Motor neuron (in vitro differentiated cells): ENCODE measurements at regions of chr5 and their contacts with region 1.

Region 1: GRCh38 chr5:88660947-88661805 is 221.8 kb downstream of the MEF2C start:
- ATAC-seq: peak; percentile 89 to 97 (median 91)
- H3K4me3 ChIP-seq: peak overlapping the region; percentile 37 to 48 (median 38)
- H3K27ac ChIP-seq: peak overlapping the region; percentile 50 to 89
- H3K4me1 ChIP-seq: peaks cover 11 to 21% of the 10 kb centered on the region in 2 donors

Region 2: DNA sequence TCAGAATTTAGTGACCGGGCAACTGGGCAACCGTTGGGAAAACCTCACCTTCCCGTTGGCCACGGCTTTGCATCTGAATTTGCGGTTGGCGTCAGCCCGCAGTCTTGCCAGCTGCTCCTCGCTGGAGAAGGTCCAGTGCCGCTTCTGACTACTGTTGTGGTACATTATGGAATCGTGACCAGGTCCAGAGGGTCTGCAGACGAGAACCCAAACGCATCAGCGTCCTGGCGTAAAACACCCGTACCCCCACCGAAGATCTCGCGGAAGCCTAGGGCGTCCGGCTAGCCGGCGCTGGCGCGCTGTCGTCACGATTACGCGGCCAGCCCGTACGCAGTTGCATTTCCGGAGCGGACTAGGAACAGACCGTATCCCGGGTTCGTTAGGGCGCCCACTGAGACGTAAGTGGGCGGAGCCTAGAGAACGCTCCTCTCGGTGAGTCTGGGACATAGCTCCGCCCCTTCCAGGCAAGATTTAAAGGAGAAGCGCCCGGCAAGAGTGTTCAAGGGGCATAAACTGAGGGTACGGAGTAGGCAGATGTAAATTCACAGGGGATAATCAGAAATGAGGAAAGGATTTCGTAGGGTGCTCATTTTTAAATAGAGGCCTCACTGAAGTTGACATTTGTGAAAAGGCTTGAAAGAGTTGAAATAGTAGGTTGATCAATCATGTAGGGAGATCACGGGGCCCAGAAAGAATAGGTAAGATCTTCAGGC is 1248.4 kb before region 1 on chr5 and contains the start of gene CCNH:
- in situ Hi-C with region 1: loop called in 1 of 9 experiments (anchors 10 kb)
- ATAC-seq: peak; percentile 92 to 98 (median 97)
- H3K4me3 ChIP-seq: peak within 1 kb of the TSS; percentile 60 to 90 (median 87)
- H3K27ac ChIP-seq: peak within 1 kb of the TSS; percentile 81 to 88
- H3K4me1 ChIP-seq: peaks cover 8 to 14% of the 10 kb centered on the region in 2 donors
- total RNA-seq, gene CCNH: 45.5 to 103 (median 74.3) TPM

Region 3: GRCh38 chr5:88140856-88141752 is 520.1 kb before region 1 on chr5:
- in situ Hi-C with region 1: loop called in 4 of 9 experiments (anchors 10 to 25 kb)
- ATAC-seq: peak; percentile 91 to 95 (median 92)
- H3K4me3 ChIP-seq: peak overlapping the region; percentile 36 to 49 (median 45)
- H3K27ac ChIP-seq: peak overlapping the region; percentile 51 to 65
- H3K4me1 ChIP-seq: peaks cover 5 to 17% of the 10 kb centered on the region in 2 donors

Region 4: DNA sequence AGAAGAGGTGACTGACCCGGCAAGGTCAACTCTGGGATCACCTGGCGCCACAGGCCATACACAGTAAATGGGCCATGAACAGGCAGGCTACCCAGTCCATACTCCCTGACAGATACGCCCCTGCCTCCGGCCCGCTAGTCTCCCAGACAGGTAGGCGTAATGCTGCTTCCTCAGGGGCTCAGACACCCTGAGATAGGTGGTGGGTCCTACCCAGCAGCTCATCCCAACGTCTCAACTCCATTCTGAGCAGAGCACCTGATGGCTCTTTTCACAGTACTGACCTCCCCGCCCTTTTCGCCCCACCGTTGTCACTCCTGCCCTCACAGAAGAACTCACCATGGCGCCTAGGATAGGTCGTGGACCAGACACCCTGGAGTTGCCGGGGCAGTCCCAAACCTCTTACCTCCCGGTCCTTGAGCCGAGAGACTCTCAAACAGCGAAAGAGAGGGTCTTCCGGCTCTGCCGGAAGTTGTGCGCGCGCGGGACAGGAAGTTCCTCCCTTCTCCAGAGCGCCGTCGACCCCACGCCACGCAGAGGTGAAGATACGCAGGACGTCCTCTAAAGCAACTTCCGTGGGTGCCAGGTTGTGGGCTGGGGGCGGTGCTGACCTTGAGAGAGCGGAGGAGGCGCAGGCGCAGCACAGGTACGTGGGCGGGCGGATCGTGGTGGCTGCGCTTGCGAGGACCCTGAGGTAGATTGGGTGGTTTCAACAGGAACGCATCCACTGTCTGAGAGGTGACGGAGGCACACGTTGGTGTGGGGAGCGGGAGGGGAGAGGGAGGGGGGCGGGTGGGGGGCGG is 392.6 kb before region 1 on chr5 and contains the start of gene TMEM161B:
- in situ Hi-C with region 1: loop called in 1 of 9 experiments (anchors 25 kb)
- ATAC-seq: peak; percentile 97 to 99 (median 98)
- H3K4me3 ChIP-seq: peak within 1 kb of the TSS; percentile 53 to 83 (median 63)
- H3K27ac ChIP-seq: peak within 1 kb of the TSS; percentile 37 to 70
- H3K4me1 ChIP-seq: peaks cover 11 to 14% of the 10 kb centered on the region in 2 donors
- total RNA-seq, gene TMEM161B: 10.9 to 32.7 (median 23.0) TPM

Region 5: GRCh38 chr5:88298425-88298824 is 362.8 kb before region 1 on chr5:
- in situ Hi-C with region 1: loop called in 1 of 9 experiments (anchors 25 kb)
- ATAC-seq: no peak
- H3K4me3 ChIP-seq: no peak overlapping the region
- H3K27ac ChIP-seq: no peak overlapping the region
- H3K4me1 ChIP-seq: no peaks in the 10 kb centered on the region

Region 6: DNA sequence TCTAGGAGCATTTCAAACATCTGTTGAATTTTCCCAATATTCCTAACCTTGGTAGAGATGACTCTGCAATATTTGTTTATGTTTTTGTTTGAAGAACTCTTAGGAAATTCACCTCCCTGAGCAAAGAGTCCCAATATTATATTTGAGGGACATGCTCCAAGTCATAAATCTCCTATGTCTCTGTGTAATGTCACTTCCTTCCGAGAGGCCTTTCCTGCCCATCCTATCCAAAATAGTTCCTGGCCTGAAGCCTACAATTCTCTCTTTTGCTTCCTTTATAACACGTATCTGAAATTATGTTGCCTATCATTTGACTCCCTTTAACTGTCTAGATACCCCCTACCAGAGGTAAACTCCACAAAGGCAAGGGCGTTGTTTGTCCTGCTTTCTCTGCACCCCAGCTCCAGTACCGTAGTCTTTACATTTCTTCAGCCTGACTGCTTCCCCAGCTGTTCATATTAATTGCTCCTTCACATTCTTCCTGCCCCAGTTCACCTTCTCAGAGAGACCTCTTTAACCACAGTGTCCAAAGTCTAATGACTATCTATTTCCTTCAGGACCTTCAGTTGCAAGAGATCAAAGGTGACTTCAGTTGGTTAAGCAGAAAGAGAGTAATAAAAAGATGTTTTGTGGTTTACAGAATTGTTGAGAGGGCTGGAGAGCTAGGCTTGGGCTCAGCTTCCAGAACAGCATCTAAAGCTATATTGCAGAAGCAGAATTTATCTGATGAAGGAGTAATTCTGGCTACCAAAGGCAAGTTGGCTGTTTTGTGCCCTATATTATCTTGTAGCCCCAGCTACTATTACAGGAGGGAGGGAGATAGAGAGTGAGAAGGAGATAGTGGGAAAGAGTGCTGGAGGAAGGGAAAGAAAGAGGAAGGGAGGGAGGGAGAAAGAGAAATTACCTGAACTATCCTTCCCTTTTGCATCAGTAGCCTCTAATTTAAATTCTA is 283.2 kb before region 1 on chr5:
- in situ Hi-C with region 1: loop called in 2 of 9 experiments (anchors 25 kb)
- ATAC-seq: no peak
- H3K4me3 ChIP-seq: no peak overlapping the region
- H3K27ac ChIP-seq: no peak overlapping the region
- H3K4me1 ChIP-seq: peaks cover 0 to 6% of the 10 kb centered on the region in 2 donors

Region 7: DNA sequence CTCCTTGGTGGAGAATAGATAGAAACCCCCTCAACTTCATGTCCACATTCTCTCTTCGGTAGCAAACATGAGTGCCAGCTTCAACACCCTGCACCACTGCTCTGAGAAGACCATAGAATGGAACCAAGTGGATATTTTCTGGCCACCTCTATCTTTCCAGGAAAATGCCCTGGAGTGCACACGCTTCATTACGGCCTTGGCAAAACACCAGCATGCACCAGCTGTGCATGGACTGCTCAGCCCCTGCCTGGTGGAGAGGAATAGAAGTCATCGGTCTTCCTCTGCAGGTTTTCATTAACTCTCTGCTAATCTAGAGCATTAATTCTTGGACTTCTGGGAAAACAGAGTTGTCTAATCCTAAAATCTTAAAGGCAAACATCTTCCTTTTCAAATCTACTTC is 180.9 kb before region 1 on chr5:
- in situ Hi-C with region 1: loop called in 1 of 9 experiments (anchors 25 kb)
- ATAC-seq: peak in 7 of 8 experiments; percentile 22 to 75 (median 42)
- H3K4me3 ChIP-seq: no peak overlapping the region
- H3K27ac ChIP-seq: no peak overlapping the region
- H3K4me1 ChIP-seq: peaks cover 36 to 48% of the 10 kb centered on the region in 2 donors

Region 8: DNA sequence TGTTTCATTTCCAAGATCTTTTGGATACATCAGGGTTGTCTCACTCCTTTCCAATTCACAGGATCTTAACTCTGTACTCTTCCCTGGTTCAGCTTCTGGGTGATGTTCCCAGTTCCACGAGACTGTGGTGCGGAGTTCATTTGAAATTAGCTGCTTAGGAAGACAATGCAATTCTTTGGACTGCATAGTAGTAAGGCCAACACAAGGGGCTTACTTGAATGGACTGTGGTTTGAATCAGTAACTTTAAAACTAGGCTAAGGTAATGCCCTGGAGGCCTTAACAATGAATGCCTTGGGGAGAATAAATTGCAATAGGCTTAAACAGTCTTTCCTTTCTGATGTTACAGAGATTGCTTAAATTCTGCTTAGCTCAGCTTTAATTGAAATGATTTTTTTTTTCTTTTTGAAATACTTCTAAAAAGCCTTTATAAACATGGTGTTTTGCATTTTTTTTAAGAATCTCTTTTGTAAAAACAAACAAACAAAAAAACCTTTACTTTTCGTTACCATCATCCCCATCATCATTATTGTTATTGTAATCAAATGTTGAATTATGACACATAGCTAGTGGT is 355.7 kb after region 1 on chr5:
- in situ Hi-C with region 1: no loop called
- ATAC-seq: no peak
- H3K4me3 ChIP-seq: no peak overlapping the region
- H3K27ac ChIP-seq: no peak overlapping the region
- H3K4me1 ChIP-seq: peaks cover 10 to 26% of the 10 kb centered on the region in 2 donors